RWPE1 (cell line): ENCODE measurements at regions of chr3 and their contacts with region 1.

Region 1: DNA sequence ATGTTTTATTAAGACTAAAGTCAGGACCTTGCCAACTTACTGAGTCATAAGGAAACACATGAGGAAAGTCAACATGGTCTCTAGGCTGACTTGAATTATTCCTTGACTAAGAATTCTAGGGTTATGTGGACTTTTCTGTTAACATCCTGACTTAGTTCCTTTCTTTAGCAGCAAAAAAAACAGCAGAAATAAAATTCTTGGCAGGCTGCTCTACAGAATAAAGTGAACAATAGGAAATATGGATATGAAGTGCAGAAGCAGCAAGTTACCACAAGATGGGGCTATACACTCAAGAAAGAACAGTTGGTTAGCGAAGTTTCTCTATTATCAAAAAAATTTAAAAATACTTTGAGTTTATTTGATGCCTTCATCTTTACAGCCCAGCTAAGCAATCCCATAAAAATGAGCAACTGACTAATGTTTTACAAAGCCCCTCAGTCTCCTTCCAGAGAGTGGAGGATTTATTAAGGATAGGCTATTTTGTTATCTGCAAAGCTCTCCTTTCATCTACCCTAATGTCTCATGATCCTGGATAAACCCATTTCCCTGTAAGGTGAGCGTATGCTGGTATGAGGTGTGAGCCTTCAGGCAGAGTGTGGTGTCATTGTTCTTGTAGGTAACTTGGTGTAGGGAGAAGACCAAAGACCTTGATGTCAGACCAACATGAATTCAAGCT is 23.1 kb upstream of the MCCC1 start:
- DNase-seq: peak; percentile 63
- H3K27ac ChIP-seq: no peak overlapping the region
- CTCF ChIP-seq: peak; percentile 85

Region 2: GRCh38 chr3:183178629-183179549 is 56.5 kb after region 1 on chr3:
- CTCF ChIA-PET with region 1: interaction called, 12 read pairs
- POLR2A ChIA-PET with region 1: no interaction called
- DNase-seq: peak; percentile 65
- H3K27ac ChIP-seq: no peak overlapping the region
- CTCF ChIP-seq: peak; percentile 37; the same call in 1 of the 2 replicates